ENCODE measurements at regions of chr10 and their contacts with region 1.

Region 1: GRCh38 chr10:3785257-3785850 is 345 bp upstream of the KLF6 start:
- DNase-seq: peak; percentile 97
- H3K4me3 ChIP-seq: peak overlapping the region; percentile 51 to 93 (median 78)
- H3K27ac ChIP-seq: peak overlapping the region; percentile 97
- H3K4me1 ChIP-seq: peaks cover 24% of the 10 kb centered on the region
- H3K27me3 ChIP-seq: no peaks in the 10 kb centered on the region
- CTCF ChIP-seq: no peak

Region 2: GRCh38 chr10:3467052-3467951 is 318.1 kb before region 1 on chr10:
- CTCF ChIA-PET with region 1: no interaction called
- dilution Hi-C with region 1: no loop called
- in situ Hi-C with region 1: no loop called
- intact Hi-C with region 1: loop called (anchors 2 kb)
- DNase-seq: peak; percentile 97
- H3K4me3 ChIP-seq: peak overlapping the region in 2 of 3 experiments; percentile 14 to 27
- H3K27ac ChIP-seq: peak overlapping the region; percentile 100
- H3K4me1 ChIP-seq: peaks cover 35% of the 10 kb centered on the region
- H3K27me3 ChIP-seq: no peaks in the 10 kb centered on the region
- CTCF ChIP-seq: peak; percentile 17 to 54

Region 3: GRCh38 chr10:3895045-3895631 is 109.8 kb after region 1 on chr10:
- CTCF ChIA-PET with region 1: no interaction called
- dilution Hi-C with region 1: no loop called
- in situ Hi-C with region 1: no loop called
- intact Hi-C with region 1: loop called (anchors 1 kb)
- DNase-seq: peak; percentile 80
- H3K4me3 ChIP-seq: no peak overlapping the region
- H3K27ac ChIP-seq: peak overlapping the region; percentile 60
- H3K4me1 ChIP-seq: peaks cover 50% of the 10 kb centered on the region
- H3K27me3 ChIP-seq: no peaks in the 10 kb centered on the region
- CTCF ChIP-seq: no peak

Region 4: DNA sequence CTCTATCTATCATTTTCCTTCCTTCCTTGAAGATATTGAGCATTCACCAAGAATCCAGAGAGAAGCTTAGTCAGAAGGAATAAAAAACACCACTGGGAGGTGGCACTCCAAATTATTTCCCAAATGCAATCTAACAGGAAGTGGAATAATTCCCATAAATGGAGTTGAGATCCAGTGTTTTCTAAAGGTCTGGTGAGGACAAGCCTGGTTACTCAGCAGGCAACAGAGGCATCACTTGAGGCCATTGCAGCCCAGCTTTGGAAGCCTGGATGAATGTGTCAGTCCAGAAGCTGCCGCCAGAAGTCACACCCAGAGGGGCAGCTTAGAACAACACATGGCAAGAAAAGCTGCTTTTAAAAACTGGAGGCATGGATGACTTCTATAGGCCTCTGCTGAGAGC is 288.6 kb after region 1 on chr10:
- CTCF ChIA-PET with region 1: no interaction called
- dilution Hi-C with region 1: no loop called
- in situ Hi-C with region 1: no loop called
- intact Hi-C with region 1: loop called (anchors 10 kb)
- DNase-seq: peak; percentile 53
- H3K4me3 ChIP-seq: no peak overlapping the region
- H3K27ac ChIP-seq: peak overlapping the region; percentile 71
- H3K4me1 ChIP-seq: peaks cover 40% of the 10 kb centered on the region
- H3K27me3 ChIP-seq: no peaks in the 10 kb centered on the region
- CTCF ChIP-seq: no peak

Region 5: GRCh38 chr10:4241724-4242345 is 456.5 kb after region 1 on chr10:
- CTCF ChIA-PET with region 1: no interaction called
- dilution Hi-C with region 1: no loop called
- in situ Hi-C with region 1: loop called in 1 of 2 experiments (anchors 10 kb)
- intact Hi-C with region 1: loop called (anchors 2 kb)
- DNase-seq: peak; percentile 94
- H3K4me3 ChIP-seq: peak overlapping the region; percentile 27 to 51 (median 46)
- H3K27ac ChIP-seq: peak overlapping the region; percentile 97
- H3K4me1 ChIP-seq: peaks cover 47% of the 10 kb centered on the region
- H3K27me3 ChIP-seq: no peaks in the 10 kb centered on the region
- CTCF ChIP-seq: no peak

Region 6: DNA sequence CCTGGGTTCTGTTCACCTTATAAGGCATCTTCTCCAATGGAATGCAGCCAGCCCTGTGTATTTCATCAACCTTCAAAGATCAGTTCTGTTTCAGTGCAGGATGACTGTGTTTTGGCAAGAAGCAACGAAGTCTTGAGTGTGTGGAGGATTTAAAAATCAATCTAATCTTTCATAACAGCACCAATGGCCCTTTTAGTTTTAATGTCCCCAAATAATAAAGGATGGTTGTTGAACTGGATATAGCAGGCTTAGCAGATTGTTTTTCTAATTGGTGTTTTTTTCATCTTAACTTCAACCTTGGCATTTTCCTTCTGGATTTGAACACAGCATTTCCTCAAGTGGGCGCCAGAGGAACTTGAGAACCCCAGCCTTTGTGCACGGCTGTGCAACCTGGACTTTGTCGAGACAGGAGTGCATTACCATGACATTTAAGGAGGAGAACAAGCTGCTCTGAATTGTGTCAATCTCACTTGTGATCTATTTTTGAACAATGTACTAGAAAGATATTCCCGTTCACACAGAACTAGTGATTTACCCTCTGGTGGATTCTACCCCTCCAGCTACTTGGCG is 727.4 kb after region 1 on chr10:
- CTCF ChIA-PET with region 1: no interaction called
- dilution Hi-C with region 1: no loop called
- in situ Hi-C with region 1: no loop called
- intact Hi-C with region 1: loop called (anchors 2 kb)
- DNase-seq: peak; percentile 70
- H3K4me3 ChIP-seq: no peak overlapping the region
- H3K27ac ChIP-seq: no peak overlapping the region
- H3K4me1 ChIP-seq: peaks cover 5% of the 10 kb centered on the region
- H3K27me3 ChIP-seq: no peaks in the 10 kb centered on the region
- CTCF ChIP-seq: peak; percentile 79 to 85

Region 7: GRCh38 chr10:4663162-4663904 is 878.0 kb after region 1 on chr10:
- CTCF ChIA-PET with region 1: no interaction called
- dilution Hi-C with region 1: no loop called
- in situ Hi-C with region 1: loop called in 1 of 2 experiments (anchors 25 kb)
- intact Hi-C with region 1: loop called (anchors 2 kb)
- DNase-seq: peak; percentile 99
- H3K4me3 ChIP-seq: no peak overlapping the region
- H3K27ac ChIP-seq: peak overlapping the region; percentile 100
- H3K4me1 ChIP-seq: peaks cover 28% of the 10 kb centered on the region
- H3K27me3 ChIP-seq: no peaks in the 10 kb centered on the region
- CTCF ChIP-seq: no peak

Measured in mammary epithelial cell (primary cell).